Activated CD4-positive, alpha-beta memory T cell treated with anti-CD3 and anti-CD28 coated beads, Interleukin-2, amount 10 ng/mL, durations not matched to agents 7 days and 5 days (primary cell): ENCODE measurements at regions of chr6 and their contacts with region 1.

Region 1: DNA sequence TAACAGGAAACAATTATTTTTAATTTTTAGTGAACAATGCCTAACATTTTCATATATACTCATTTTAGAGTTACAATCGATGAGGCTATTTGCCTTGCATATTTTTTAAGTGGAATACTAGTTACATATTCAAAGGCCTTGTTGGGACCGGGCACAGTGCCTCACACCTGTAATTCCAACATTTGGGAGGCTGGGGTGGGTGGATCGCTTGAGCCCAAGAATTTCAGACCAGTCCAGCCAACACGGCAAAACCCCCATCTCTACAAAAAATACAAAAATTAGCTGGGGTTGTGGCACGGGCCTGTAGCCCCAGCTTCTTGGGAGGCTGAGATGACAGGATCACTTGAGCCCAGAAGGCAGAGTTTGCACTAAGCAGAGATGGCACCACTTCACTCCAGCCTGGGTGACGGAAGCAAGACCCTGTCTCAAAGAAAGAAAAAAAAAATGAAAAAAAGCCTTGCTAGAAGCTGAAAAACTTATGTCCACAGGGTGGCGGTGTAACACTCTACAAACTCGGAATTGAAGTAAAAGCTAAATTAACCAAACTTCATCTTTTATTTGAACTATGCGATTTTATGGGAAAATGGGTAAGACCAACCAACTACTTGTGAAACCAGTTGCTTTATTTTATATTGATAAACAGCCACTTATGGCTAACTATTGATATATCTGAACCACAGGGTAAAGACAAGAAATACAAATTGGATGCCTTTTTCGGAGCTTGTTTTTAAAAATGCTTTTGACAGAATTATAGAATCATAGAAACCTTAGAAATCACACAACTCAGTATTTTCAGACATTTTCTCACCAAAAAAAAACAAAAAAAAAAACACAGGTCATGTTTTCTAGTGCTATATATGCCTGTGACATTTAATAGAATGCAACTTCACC is 24.1 kb upstream of the ROS1 start:
- DNase-seq: peak; percentile 59
- H3K4me3 Mint-ChIP-seq: no peak overlapping the region
- H3K27ac Mint-ChIP-seq: no peak overlapping the region
- H3K4me1 Mint-ChIP-seq: no peaks in the 10 kb centered on the region
- H3K27me3 Mint-ChIP-seq: peaks cover 31% of the 10 kb centered on the region

Region 2: GRCh38 chr6:117482240-117483003 is 32.6 kb after region 1 on chr6 and contains the start of gene DCBLD1:
- CTCF ChIA-PET with region 1: interaction called, 22 read pairs
- POLR2A ChIA-PET with region 1: interaction called, 9 read pairs
- DNase-seq: peak; percentile 76
- H3K4me3 Mint-ChIP-seq: peak within 1 kb of the TSS; percentile 81
- H3K27ac Mint-ChIP-seq: peak within 1 kb of the TSS; percentile 68
- H3K4me1 Mint-ChIP-seq: peaks cover 24% of the 10 kb centered on the region
- H3K27me3 Mint-ChIP-seq: peaks cover 30% of the 10 kb centered on the region
- total RNA-seq, gene DCBLD1: 7.8 to 10.6 TPM

Region 3: GRCh38 chr6:117547688-117548621 is 98.2 kb after region 1 on chr6:
- CTCF ChIA-PET with region 1: interaction called, 43 read pairs
- POLR2A ChIA-PET with region 1: interaction called, 8 read pairs
- DNase-seq: peak; percentile 58
- H3K4me3 Mint-ChIP-seq: peak overlapping the region; percentile 75
- H3K27ac Mint-ChIP-seq: peak overlapping the region; percentile 94
- H3K4me1 Mint-ChIP-seq: peaks cover 44% of the 10 kb centered on the region
- H3K27me3 Mint-ChIP-seq: no peaks in the 10 kb centered on the region

Region 4: DNA sequence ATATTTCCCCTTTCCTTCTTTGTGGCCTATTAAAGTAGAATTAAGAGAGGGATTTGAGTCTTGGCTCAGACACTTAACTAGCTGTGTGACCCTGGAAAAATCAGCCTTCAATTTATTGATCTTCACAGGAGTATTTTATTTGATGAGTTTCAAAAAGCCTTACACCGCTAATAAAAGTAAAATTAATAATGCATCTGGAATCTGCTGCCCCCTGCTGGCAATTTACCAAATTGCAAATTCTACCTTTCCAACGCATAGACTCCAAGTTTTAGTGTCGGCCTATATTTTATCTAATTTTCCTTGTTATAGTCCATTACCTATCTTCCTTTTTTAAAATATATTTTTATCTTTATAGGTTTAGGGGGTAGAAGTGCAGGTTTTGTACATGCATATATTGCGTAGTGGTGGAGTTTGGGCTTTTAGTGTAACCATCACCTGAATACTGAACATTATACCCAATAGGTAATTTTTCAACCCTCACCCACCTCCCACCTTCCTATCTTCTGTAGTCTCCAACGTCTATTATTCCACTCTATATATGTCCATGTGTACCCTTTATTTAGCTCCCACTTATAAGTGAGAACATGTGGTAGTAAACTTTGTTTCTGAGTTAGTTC is 106.2 kb after region 1 on chr6:
- CTCF ChIA-PET with region 1: interaction called, 54 read pairs
- POLR2A ChIA-PET with region 1: interaction called, 3 read pairs
- DNase-seq: peak; percentile 54
- H3K4me3 Mint-ChIP-seq: no peak overlapping the region
- H3K27ac Mint-ChIP-seq: no peak overlapping the region
- H3K4me1 Mint-ChIP-seq: peaks cover 7% of the 10 kb centered on the region
- H3K27me3 Mint-ChIP-seq: no peaks in the 10 kb centered on the region